ENCODE measurements at regions of chr12 and their contacts with region 1.

Region 1: DNA sequence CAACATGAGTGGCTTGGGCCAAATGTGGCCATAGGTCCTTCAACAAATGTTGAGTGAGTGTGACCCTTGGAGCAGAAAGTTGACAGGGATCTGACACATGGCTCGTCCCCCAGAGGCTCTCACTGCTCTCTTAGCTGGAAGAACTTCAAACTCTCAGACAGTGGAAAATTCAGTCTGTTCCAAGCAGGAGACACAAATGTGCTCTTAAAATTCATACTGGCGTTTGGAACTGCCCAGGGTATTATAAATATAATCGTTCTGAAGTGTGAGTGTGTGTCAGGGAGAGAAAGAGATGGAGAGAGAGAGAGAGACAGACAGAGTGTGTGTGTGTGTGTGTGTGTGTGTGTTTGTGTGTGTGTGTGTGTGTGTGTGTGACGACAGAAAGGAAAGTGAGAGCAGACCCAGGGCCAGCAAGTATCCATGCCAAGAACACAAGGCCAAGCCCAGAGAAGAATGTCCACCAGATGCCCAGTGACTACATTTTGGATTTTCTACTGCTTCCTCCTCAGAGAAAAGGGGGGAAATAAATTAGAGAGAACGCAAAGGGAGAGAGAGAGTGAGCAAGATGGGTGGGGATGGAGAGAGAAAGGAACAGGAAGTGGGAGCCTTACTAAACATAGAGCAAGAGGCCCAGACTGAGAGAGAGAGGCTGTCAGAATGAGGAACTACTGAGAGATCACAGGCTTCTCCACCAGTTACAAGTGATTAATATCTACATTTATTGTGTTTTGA is 193.6 kb upstream of the NUDT4 start:
- DNase-seq: peak; percentile 51 to 79 (median 73)
- ATAC-seq: peak; percentile 87 to 89
- H3K4me3 ChIP-seq: no peak overlapping the region
- H3K27ac ChIP-seq: peak overlapping the region; percentile 99
- H3K4me1 ChIP-seq: peaks cover 3% of the 10 kb centered on the region
- H3K27me3 ChIP-seq: no peaks in the 10 kb centered on the region

Region 2: DNA sequence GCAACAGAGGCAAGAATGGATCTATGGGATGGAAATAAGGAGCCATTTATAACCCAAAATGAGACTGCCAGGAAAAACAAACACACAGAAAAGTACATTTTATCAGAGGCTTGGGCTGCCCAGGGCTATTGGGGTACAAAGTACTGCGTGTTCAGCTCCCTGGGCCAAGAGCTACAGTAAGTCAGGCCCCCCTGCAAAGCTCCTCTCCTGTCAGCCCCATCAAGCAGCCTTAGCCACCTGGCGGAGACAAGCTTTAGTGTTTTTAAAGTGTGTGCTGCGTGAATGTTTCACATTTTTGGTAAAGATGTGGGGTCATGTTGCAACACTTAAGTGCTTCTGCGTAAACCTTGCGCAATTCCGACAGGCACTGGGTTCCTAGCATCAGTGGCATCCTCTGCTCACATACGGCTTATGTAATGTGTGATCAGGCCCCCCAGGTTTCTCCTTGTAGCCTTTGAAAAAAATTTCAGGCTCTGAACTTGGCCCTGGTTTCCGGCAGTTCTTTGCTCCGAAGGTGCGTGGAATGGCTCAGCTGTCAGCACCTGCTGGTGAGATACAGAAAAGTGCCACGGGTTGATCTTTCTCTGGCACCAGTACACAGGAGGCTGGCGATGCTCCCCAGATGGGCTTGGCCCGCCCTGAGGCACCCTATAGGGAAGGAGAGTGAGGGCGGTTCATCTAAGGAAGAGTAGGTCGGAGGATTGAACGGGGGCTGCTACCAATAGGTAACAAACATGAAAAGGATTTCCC is 56.3 kb before region 1 on chr12:
- intact Hi-C with region 1: loop called in 1 of 4 experiments (anchors 5 kb)
- DNase-seq: peak; percentile 69 to 84 (median 81)
- ATAC-seq: peak; percentile 93
- H3K4me3 ChIP-seq: no peak overlapping the region
- H3K27ac ChIP-seq: peak overlapping the region; percentile 60
- H3K4me1 ChIP-seq: peaks cover 5% of the 10 kb centered on the region
- H3K27me3 ChIP-seq: no peaks in the 10 kb centered on the region

Region 3: GRCh38 chr12:93378373-93379325 is 194.5 kb after region 1 on chr12:
- intact Hi-C with region 1: loop called in 1 of 4 experiments (anchors 5 kb)
- DNase-seq: peak; percentile 46 to 74 (median 72)
- ATAC-seq: peak in 1 of 2 donors; percentile 39
- H3K4me3 ChIP-seq: peak overlapping the region; percentile 58
- H3K27ac ChIP-seq: peak overlapping the region; percentile 76
- H3K4me1 ChIP-seq: peaks cover 2% of the 10 kb centered on the region
- H3K27me3 ChIP-seq: no peaks in the 10 kb centered on the region